ENCODE measurements at regions of chr19 and their contacts with region 1.

Region 1: GRCh38 chr19:506404-507285 is 652 bp upstream of the TPGS1 start:
- DNase-seq: peak; percentile 99
- H3K4me3 ChIP-seq: peak overlapping the region; percentile 83
- H3K27ac ChIP-seq: peak overlapping the region; percentile 54
- H3K4me1 ChIP-seq: peaks cover 36% of the 10 kb centered on the region
- CTCF ChIP-seq: peak; percentile 87

Region 2: DNA sequence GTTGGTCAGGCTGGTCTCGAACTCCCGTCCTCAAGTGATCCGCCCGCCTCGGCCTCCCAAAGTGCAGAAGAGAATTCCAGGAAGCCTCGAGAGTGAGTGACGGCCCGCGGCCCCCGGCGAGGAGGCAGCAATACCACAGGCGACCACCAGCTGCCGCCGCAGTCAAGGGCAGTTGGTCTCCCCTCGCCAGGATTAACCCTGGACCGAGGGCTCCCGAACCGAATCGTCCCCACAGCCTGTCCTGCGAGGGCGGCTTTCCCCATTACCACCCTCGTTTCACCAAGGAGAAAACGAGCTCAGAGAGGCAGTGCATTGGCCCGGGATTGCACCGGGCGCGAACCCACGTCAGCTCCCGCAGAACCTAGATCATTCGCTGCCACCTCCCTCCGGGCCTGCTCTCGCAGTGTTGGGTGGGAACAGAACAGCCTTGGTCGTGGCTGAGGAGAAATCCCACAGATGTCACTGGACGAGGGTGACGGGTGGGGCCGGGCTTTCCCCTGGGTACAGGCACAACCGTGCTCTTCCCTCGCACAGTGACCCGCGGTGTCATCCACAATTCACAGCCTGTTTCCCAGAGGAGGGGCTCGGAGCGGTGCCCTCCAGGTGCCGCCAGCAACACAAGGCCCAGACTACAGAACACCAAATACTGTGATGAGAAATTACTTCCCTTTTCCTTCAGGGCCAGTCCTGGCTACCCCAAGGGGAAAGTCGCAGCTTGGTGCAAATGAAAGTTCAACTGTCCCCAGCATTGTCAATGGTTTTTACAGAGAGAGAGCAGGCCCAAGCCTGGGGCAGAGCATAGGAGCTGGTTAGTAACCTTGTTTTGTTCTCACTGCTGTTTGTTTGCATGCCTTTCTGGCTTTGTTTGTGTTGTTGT is 122.5 kb before region 1 on chr19:
- CTCF ChIA-PET with region 1: no interaction called
- POLR2A ChIA-PET with region 1: no interaction called
- intact Hi-C with region 1: loop called (anchors 1 kb)
- DNase-seq: no peak
- H3K4me3 ChIP-seq: peak overlapping the region; percentile 3
- H3K27ac ChIP-seq: peak overlapping the region; percentile 37
- H3K4me1 ChIP-seq: peaks cover 37% of the 10 kb centered on the region
- CTCF ChIP-seq: peak; percentile 25

Region 3: DNA sequence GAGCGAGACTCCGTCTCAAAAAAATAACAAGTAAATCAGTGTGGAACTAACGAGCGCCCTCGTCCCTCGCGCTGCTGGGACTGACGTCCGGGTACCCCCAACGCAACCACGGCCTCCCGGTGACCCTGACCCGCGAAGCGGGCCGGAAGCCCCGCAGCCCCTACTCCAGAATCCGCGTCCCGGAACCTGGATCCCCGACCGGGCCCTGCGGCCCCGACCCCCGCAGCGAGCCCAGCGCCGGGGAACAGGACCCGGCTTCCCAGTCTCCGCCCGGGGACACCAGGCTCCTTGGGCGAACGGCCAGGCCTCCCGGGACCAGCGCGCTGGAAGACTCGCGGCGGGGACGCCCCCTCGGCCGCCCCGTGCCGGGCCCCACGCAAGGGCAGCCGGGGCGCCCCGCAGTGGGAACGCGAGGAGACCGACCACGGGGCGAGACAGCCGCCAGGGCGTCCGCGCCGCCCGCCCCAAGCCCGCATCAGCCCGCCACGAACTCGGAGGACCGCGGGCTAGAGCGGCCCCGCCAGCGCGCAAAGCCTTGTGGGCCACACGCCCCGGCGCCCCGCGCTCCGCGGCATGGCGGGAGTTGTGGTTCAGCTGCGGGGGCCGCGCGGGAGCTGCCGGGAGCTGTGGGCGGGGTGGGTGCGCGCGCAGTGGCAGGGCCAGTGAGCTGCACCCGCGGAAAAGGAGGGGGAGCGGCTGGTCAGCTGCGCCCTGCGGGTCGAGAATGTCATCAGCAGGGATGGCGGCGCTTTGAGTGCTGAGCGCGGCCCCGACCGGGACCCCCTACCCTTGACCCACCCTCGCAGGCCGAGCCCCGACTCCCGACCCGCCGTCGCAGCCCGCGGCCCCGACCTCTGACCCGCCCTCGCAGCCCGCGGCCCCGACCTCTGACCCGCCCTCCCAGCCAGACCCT is 17.9 kb before region 1 on chr19:
- CTCF ChIA-PET with region 1: interaction called, 3 read pairs
- POLR2A ChIA-PET with region 1: interaction called, 3 read pairs
- intact Hi-C with region 1: loop called (anchors 2 kb)
- DNase-seq: peak; percentile 96
- H3K4me3 ChIP-seq: peak overlapping the region; percentile 96
- H3K27ac ChIP-seq: peak overlapping the region; percentile 83
- H3K4me1 ChIP-seq: peaks cover 11% of the 10 kb centered on the region
- CTCF ChIP-seq: peak; percentile 28; the same call in 1 of the 2 replicates

Measured in OCI-LY7 (cell line).